ENCODE measurements at regions of chr2 and their contacts with region 1.

Region 1: GRCh38 chr2:133837441-133838094 is 269.3 kb upstream of the NCKAP5 start:
- DNase-seq: no peak
- H3K4me3 ChIP-seq: no peak overlapping the region
- H3K4me3 Mint-ChIP-seq: no peak overlapping the region
- H3K27ac ChIP-seq: no peak overlapping the region
- H3K27ac Mint-ChIP-seq: no peak overlapping the region
- H3K4me1 ChIP-seq: no peaks in the 10 kb centered on the region
- H3K4me1 Mint-ChIP-seq: no peaks in the 10 kb centered on the region
- H3K27me3 ChIP-seq: no peaks in the 10 kb centered on the region
- H3K27me3 Mint-ChIP-seq: peaks cover 1 to 10% (median 2%) of the 10 kb centered on the region in 3 donors
- CTCF ChIP-seq: no peak

Region 2: DNA sequence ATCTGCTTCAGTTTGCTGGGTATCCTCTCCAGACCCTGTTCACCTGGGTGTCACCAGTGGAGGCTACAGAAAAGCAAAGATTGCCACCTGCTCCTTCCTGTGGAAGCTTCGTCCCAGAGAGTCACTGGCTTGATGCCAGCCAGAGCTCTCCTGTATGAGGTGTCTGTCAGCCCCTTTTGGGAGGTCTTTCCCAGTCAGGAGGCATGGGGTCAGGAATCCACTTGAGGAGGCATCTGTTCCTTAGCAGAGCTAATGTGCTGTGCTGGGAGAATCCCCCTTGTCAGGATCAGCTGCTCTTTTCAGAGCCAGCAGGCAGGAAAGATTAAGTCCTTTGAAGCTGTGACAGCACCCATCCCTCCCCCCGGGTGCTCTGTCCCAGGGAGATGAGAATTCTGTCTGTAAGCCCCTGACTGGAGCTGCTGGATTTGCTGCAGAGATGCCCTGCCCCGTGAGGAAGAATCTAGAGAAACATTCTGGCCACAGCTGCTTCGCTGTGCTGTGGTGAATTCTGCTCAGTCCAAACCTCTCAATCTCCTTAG is 1299.2 kb before region 1 on chr2:
- intact Hi-C with region 1: loop called in 1 of 2 experiments (anchors 5 kb)
- DNase-seq: no peak
- H3K4me3 ChIP-seq: no peak overlapping the region
- H3K4me3 Mint-ChIP-seq: no peak overlapping the region
- H3K27ac ChIP-seq: no peak overlapping the region
- H3K27ac Mint-ChIP-seq: no peak overlapping the region
- H3K4me1 ChIP-seq: no peaks in the 10 kb centered on the region
- H3K4me1 Mint-ChIP-seq: no peaks in the 10 kb centered on the region
- H3K27me3 ChIP-seq: no peaks in the 10 kb centered on the region
- H3K27me3 Mint-ChIP-seq: peaks cover 0 to 4% (median 2%) of the 10 kb centered on the region in 3 donors
- CTCF ChIP-seq: no peak

Region 3: GRCh38 chr2:133848111-133848649 is 10.6 kb after region 1 on chr2:
- intact Hi-C with region 1: no loop called
- DNase-seq: no peak
- H3K4me3 ChIP-seq: no peak overlapping the region
- H3K4me3 Mint-ChIP-seq: no peak overlapping the region
- H3K27ac ChIP-seq: no peak overlapping the region
- H3K27ac Mint-ChIP-seq: no peak overlapping the region
- H3K4me1 ChIP-seq: no peaks in the 10 kb centered on the region
- H3K4me1 Mint-ChIP-seq: no peaks in the 10 kb centered on the region
- H3K27me3 ChIP-seq: no peaks in the 10 kb centered on the region
- H3K27me3 Mint-ChIP-seq: peaks cover 2 to 13% (median 6%) of the 10 kb centered on the region in 3 donors
- CTCF ChIP-seq: no peak

Region 4: DNA sequence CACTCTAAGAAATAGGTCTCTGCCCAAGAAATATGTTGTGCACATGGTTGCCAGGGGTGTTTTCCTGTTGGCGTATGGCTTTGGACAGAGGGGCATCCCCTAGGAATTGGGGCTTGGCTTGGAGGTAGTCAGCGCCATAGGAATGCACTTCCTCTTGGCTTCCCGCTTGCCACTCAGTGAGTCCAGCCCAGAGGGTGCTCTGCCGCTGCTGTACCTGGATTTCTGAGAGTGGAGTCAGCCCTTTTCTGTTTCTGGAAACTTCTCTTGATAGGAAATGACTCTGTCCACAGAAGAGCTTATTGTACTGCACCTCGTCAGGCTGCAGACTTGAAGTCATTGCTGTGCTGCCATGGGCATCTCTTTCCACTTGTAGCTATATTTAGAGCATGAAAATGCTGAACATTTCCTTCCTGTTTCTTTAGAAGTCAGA is 299.6 kb after region 1 on chr2:
- intact Hi-C with region 1: no loop called
- DNase-seq: peak in 2 of 3 donors; percentile 41 to 47
- H3K4me3 ChIP-seq: peak overlapping the region; percentile 32 to 75 (median 40)
- H3K4me3 Mint-ChIP-seq: peak overlapping the region; percentile 81 to 97
- H3K27ac ChIP-seq: peak overlapping the region; percentile 51 to 74
- H3K27ac Mint-ChIP-seq: peak overlapping the region; percentile 78 to 94 (median 88)
- H3K4me1 ChIP-seq: peaks cover 42 to 52% of the 10 kb centered on the region in 2 donors
- H3K4me1 Mint-ChIP-seq: peaks cover 71% of the 10 kb centered on the region
- H3K27me3 ChIP-seq: no peaks in the 10 kb centered on the region
- H3K27me3 Mint-ChIP-seq: peaks cover 0 to 5% (median 0%) of the 10 kb centered on the region in 3 donors
- CTCF ChIP-seq: no peak

Measured in CD14-positive monocyte (primary cell).